ENCODE measurements at regions of chr11 and their contacts with region 1.

Region 1: GRCh38 chr11:13462901-13463778 is at the start of gene BTBD10:
- DNase-seq: peak; percentile 97
- H3K4me3 ChIP-seq: peak within 1 kb of the TSS; percentile 13 to 76 (median 70)
- H3K27ac ChIP-seq: peak within 1 kb of the TSS; percentile 60
- H3K4me1 ChIP-seq: peaks cover 26% of the 10 kb centered on the region
- H3K27me3 ChIP-seq: peaks cover 2 to 6% of the 10 kb centered on the region in 2 experiments
- CTCF ChIP-seq: no peak
- POLR2A ChIP-seq: peak; percentile 86
- total RNA-seq, gene BTBD10: 49.6 and 54.8 TPM in 2 replicates

Region 2: GRCh38 chr11:13276832-13277767 is 186.0 kb before region 1 on chr11:
- CTCF ChIA-PET with region 1: no interaction called
- POLR2A ChIA-PET with region 1: no interaction called
- dilution Hi-C with region 1: no loop called
- intact Hi-C with region 1: loop called (anchors 5 kb)
- DNase-seq: peak; percentile 98
- H3K4me3 ChIP-seq: peak overlapping the region; percentile 60 to 88 (median 81)
- H3K27ac ChIP-seq: no peak overlapping the region
- H3K4me1 ChIP-seq: peaks cover 13% of the 10 kb centered on the region
- H3K27me3 ChIP-seq: peaks cover 52 to 64% of the 10 kb centered on the region in 2 experiments
- CTCF ChIP-seq: no peak
- POLR2A ChIP-seq: no peak

Region 3: DNA sequence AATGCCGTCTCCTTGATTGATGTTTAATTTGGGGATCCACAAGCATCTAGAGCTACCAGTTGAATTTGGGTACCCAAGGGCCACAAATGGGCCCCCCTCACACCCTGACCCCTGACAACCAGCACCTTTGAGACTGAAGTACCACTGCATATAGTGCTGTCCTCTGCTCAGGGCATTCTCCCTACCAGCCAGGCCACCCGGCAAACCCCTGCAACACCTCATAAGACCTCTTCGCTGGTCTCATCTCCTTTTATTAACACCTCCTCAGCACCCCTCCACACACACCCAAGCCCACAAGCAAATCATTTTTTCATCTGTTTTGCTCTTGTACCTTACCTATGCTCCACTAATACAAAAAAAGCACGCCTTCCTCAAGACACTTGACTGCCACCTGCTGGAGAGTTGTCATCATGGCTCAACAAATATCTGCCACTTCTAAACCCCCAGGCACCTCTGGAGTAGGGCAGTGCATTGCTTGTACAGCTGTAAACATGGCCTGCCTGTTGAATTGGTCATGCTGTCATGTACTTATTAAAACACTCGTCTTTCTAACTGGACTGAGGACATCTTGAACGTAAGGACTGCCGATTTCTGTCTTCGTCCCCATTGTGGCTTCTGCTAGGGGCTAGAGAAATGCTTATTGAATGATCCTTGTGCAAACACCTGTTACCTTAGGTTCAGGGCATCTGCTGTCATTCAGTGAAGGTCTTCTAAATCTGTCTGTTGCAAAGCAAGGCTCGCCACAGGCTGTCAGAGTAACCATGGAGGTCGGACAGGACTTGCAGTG is 119.0 kb before region 1 on chr11:
- CTCF ChIA-PET with region 1: interaction called, 15 read pairs
- POLR2A ChIA-PET with region 1: no interaction called
- dilution Hi-C with region 1: no loop called
- intact Hi-C with region 1: loop called (anchors 5 kb)
- DNase-seq: peak; percentile 70
- H3K4me3 ChIP-seq: no peak overlapping the region
- H3K27ac ChIP-seq: no peak overlapping the region
- H3K4me1 ChIP-seq: peaks cover 8% of the 10 kb centered on the region
- H3K27me3 ChIP-seq: no peaks in the 10 kb centered on the region
- CTCF ChIP-seq: peak; percentile 73 to 78
- POLR2A ChIP-seq: no peak

Region 4: GRCh38 chr11:13446444-13446843 is 16.7 kb before region 1 on chr11:
- CTCF ChIA-PET with region 1: interaction called, 4 read pairs
- POLR2A ChIA-PET with region 1: interaction called, 4 read pairs
- dilution Hi-C with region 1: no loop called
- intact Hi-C with region 1: loop called (anchors 1 kb)
- DNase-seq: peak; percentile 65
- H3K4me3 ChIP-seq: peak overlapping the region in 1 of 3 experiments; percentile 21
- H3K27ac ChIP-seq: peak overlapping the region; percentile 77
- H3K4me1 ChIP-seq: peaks cover 45% of the 10 kb centered on the region
- H3K27me3 ChIP-seq: no peaks in the 10 kb centered on the region
- CTCF ChIP-seq: no peak
- POLR2A ChIP-seq: no peak

Region 5: GRCh38 chr11:13535819-13536218 is 72.7 kb after region 1 on chr11:
- CTCF ChIA-PET with region 1: no interaction called
- POLR2A ChIA-PET with region 1: no interaction called
- dilution Hi-C with region 1: no loop called
- intact Hi-C with region 1: no loop called
- DNase-seq: no peak
- H3K4me3 ChIP-seq: no peak overlapping the region
- H3K27ac ChIP-seq: no peak overlapping the region
- H3K4me1 ChIP-seq: no peaks in the 10 kb centered on the region
- H3K27me3 ChIP-seq: no peaks in the 10 kb centered on the region
- CTCF ChIP-seq: no peak
- POLR2A ChIP-seq: no peak

Region 6: DNA sequence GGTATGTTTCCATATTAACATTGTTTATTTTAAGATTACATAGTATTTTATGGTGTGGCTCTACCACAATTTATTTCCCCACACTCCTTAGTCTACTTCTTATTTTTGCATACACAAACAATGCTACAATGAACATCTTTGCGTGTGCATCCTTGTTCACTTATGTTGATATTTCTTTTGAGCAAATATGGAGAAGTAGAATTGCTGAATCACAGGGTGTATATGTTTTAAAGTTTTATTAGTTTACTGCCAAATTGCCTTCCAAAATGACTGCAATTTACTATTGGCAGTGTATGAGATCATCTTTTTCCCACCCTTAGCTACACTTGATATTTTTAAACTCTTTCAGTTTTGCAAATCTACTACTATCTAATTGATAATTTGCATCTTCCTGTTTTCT is 166.6 kb after region 1 on chr11:
- CTCF ChIA-PET with region 1: no interaction called
- POLR2A ChIA-PET with region 1: no interaction called
- dilution Hi-C with region 1: no loop called
- intact Hi-C with region 1: no loop called
- DNase-seq: no peak
- H3K4me3 ChIP-seq: no peak overlapping the region
- H3K27ac ChIP-seq: no peak overlapping the region
- H3K4me1 ChIP-seq: no peaks in the 10 kb centered on the region
- H3K27me3 ChIP-seq: peaks cover 0 to 5% of the 10 kb centered on the region in 2 experiments
- CTCF ChIP-seq: no peak
- POLR2A ChIP-seq: no peak

Region 7: GRCh38 chr11:13644997-13645687 is 182.0 kb after region 1 on chr11:
- CTCF ChIA-PET with region 1: no interaction called
- POLR2A ChIA-PET with region 1: no interaction called
- dilution Hi-C with region 1: no loop called
- intact Hi-C with region 1: no loop called
- DNase-seq: peak; percentile 29
- H3K4me3 ChIP-seq: no peak overlapping the region
- H3K27ac ChIP-seq: peak overlapping the region; percentile 28
- H3K4me1 ChIP-seq: peaks cover 11% of the 10 kb centered on the region
- H3K27me3 ChIP-seq: peaks cover 3 to 5% of the 10 kb centered on the region in 2 experiments
- CTCF ChIP-seq: no peak
- POLR2A ChIP-seq: no peak

Region 8: DNA sequence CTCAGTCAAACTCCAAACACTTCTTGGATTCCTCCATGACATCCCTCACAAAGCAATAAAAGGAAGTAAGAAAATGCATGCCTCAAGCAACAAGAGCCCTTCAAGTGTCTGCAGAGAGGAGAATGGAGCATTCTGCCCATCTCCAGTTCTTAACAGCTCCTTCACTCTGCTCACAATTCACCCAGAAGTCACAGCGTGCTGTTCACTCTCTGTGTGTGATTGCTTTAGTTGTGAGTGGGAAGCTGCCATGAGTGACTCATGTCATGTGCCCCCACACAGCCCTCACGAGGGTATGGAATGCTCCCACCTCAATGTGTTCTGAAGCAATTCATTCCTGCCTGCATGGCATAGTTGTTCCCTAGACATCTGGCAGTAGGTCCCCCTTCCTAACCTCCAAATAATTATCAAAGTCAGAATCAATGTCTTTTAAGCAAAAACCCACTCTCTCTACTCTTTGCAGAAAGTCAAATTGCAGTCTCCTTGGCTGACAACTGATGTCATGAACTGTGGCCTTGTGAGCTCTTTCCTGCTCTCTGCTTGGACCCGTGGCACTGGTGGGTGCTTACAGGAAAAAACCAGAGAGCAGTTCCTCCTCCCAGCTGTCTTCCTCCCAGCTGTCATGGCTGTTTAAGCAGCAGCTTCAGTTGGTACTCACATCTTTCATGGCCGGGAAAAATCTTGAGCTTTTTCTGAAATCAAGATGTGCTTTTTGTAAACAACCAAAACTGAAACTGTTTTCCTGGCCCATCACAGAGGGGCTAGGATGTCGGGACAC is 387.3 kb after region 1 on chr11:
- CTCF ChIA-PET with region 1: no interaction called
- POLR2A ChIA-PET with region 1: no interaction called
- dilution Hi-C with region 1: no loop called
- intact Hi-C with region 1: no loop called
- DNase-seq: no peak
- H3K4me3 ChIP-seq: no peak overlapping the region
- H3K27ac ChIP-seq: no peak overlapping the region
- H3K4me1 ChIP-seq: no peaks in the 10 kb centered on the region
- H3K27me3 ChIP-seq: peaks cover 0 to 2% of the 10 kb centered on the region in 2 experiments
- CTCF ChIP-seq: no peak
- POLR2A ChIP-seq: no peak